ENCODE measurements at regions of chr2 and their contacts with region 1.

Region 1: GRCh38 chr2:121319953-121320352 is 35.0 kb upstream of the TFCP2L1 start:
- DNase-seq: no peak
- H3K4me3 ChIP-seq: no peak overlapping the region
- H3K4me3 Mint-ChIP-seq: no peak overlapping the region
- H3K27ac ChIP-seq: no peak overlapping the region
- H3K27ac Mint-ChIP-seq: no peak overlapping the region
- H3K4me1 ChIP-seq: no peaks in the 10 kb centered on the region
- H3K4me1 Mint-ChIP-seq: peaks cover 3% of the 10 kb centered on the region
- H3K27me3 ChIP-seq: no peaks in the 10 kb centered on the region
- H3K27me3 Mint-ChIP-seq: peaks cover 3 to 9% (median 8%) of the 10 kb centered on the region in 3 donors
- CTCF ChIP-seq: no peak

Region 2: GRCh38 chr2:121088251-121089165 is 231.4 kb before region 1 on chr2:
- intact Hi-C with region 1: loop called in 1 of 2 experiments (anchors 5 kb)
- DNase-seq: no peak
- H3K4me3 ChIP-seq: no peak overlapping the region
- H3K4me3 Mint-ChIP-seq: no peak overlapping the region
- H3K27ac ChIP-seq: no peak overlapping the region
- H3K27ac Mint-ChIP-seq: no peak overlapping the region
- H3K4me1 ChIP-seq: no peaks in the 10 kb centered on the region
- H3K4me1 Mint-ChIP-seq: no peaks in the 10 kb centered on the region
- H3K27me3 ChIP-seq: no peaks in the 10 kb centered on the region
- H3K27me3 Mint-ChIP-seq: peaks cover 2 to 7% (median 5%) of the 10 kb centered on the region in 3 donors
- CTCF ChIP-seq: no peak

Region 3: DNA sequence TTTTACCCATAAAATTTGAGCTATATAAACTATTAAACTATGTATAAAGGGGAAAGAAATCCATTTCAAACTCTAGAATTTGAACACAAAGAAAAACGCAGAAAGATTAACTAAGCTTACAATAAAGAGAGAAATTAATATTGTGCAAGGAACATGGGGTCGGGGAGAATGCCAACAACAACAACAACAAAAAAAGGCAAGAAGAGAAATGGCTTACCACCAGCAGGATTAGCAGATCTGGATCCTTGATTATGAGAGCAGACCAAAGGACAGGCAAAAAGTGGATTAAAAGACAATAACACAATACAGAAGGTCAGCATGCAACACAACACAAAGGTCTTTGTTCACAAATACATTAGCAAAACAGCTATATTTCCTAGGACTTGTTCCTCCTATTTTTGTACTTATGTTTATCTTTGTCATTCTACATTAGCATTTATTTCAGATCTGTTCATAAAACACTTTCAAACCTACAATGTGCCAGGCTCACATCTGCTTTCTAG is 107.3 kb after region 1 on chr2:
- intact Hi-C with region 1: no loop called
- DNase-seq: no peak
- H3K4me3 ChIP-seq: no peak overlapping the region
- H3K4me3 Mint-ChIP-seq: no peak overlapping the region
- H3K27ac ChIP-seq: no peak overlapping the region
- H3K27ac Mint-ChIP-seq: no peak overlapping the region
- H3K4me1 ChIP-seq: no peaks in the 10 kb centered on the region
- H3K4me1 Mint-ChIP-seq: no peaks in the 10 kb centered on the region
- H3K27me3 ChIP-seq: no peaks in the 10 kb centered on the region
- H3K27me3 Mint-ChIP-seq: peaks cover 0 to 2% (median 0%) of the 10 kb centered on the region in 3 donors
- CTCF ChIP-seq: no peak